Breast epithelium (tissue), 4 donors: ENCODE measurements at regions of chr2 and their contacts with region 1.

Region 1: GRCh38 chr2:64873472-64873924 is 115.7 kb upstream of the SLC1A4 start:
- DNase-seq: peak; percentile 52 to 84
- H3K4me3 ChIP-seq: peak overlapping the region; percentile 5 to 55 (median 20)
- H3K27ac ChIP-seq: peak overlapping the region in 1 of 2 donors; percentile 9
- H3K4me1 ChIP-seq: no peaks in the 10 kb centered on the region
- H3K27me3 ChIP-seq: no peaks in the 10 kb centered on the region
- CTCF ChIP-seq: peak; percentile 95 to 96 (median 96)
- POLR2A ChIP-seq: no peak

Region 2: DNA sequence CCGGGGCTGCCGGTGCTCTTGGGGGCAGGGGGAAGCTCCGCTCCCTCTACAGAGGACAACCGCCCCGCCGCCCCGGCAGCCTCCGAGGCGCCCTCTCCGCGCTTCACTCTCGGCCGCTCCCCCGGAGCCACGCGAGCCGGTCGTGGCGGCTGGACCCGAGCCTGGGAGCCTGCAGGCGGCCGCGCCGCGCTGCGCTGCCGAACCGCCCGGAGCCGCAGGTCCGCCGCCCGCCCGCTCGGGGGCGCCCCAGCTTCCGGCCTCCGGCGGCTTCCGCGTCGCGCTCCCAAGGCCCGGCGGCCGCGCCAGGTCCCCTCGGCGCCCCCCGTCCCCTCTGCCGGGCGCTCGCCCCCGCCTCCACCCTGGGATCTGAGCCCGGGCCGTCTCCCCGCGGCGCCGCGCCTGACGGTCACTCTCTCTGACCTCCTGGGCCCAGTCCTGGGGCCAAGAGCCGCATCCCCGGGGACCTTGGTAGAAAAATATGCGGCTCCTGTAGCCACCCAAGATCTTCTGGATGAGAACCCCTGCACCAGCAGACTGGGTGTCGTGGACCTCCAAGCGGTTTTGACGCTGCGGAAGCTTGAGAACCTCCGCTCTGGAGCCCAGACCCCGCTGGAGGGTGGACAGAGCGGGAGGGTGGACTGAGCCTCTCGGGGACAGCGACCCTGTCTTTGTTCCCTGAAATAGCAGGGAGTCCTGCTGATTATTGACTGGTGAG is 264.1 kb before region 1 on chr2:
- intact Hi-C with region 1: loop called (anchors 10 kb)
- DNase-seq: no peak
- H3K4me3 ChIP-seq: peak overlapping the region; percentile 47 to 79 (median 59)
- H3K27ac ChIP-seq: peak overlapping the region; percentile 81 to 83
- H3K4me1 ChIP-seq: peaks cover 0 to 16% of the 10 kb centered on the region in 2 donors
- H3K27me3 ChIP-seq: no peaks in the 10 kb centered on the region
- CTCF ChIP-seq: peak in 1 of 3 donors; percentile 72
- POLR2A ChIP-seq: no peak